ENCODE measurements at regions of chr16 and their contacts with region 1.

Region 1: DNA sequence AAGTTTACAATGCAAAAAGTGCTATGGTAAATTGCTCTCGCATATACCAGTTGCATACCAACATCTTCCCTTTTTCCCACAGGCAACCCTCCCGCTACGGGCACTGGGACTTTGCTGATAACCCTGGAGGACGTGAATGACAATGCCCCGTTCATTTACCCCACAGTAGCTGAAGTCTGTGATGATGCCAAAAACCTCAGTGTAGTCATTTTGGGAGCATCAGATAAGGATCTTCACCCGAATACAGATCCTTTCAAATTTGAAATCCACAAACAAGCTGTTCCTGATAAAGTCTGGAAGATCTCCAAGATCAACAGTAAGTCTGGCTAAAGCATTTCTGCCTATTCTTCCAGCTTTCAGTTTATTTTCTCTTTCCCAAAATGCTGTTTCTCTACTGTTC is 27.9 kb upstream of the HSBP1 start:
- DNase-seq: no peak
- ATAC-seq: peak; percentile 17 to 23

Region 2: DNA sequence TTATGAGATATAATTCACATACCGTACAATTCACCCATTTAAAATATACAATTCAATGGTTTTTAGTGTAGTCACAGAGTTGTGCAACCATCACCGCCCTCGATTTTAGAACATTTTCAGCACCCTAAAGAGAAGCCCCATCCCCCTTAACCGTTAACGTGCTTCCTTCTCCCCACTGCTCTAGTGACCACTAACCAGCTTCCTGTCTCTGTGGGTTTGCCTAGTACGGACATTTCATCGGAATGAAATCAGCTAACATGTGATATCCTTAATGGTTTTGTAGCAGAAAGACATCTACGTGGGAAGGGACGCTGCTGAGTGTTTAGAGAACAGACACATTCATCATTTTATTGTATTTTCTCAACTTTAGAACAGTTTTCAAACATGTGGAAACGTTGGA is 52.9 kb before region 1 on chr16:
- intact Hi-C with region 1: loop called in 1 of 2 experiments (anchors 10 kb)
- DNase-seq: no peak
- ATAC-seq: peak; percentile 38

Region 3: DNA sequence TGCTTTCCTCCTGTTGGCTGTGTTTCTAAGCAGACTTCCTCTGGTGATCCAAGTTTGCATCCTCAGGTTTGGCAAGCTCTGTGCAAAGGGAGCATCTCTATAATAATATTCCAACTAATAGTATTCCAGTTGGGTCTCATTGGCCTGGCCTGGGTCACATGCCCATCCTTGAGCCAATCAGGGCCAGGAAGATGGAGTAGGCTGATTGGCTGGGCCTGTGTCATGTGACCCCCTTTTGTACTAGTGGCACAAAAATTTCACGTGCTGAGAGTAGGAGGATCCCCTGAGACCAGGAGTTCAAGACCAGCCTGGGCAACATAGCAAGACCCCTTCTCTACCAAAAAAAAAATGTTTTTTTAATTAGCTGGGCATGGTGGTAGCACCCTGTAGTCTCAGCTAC is 83.8 kb after region 1 on chr16:
- intact Hi-C with region 1: no loop called
- DNase-seq: no peak
- ATAC-seq: no peak